ENCODE measurements at regions of chr22 and their contacts with region 1.

Region 1: GRCh38 chr22:24189249-24190158 is 8.2 kb downstream of the SUSD2 start:
- DNase-seq: peak; percentile 68
- H3K4me3 Mint-ChIP-seq: no peak overlapping the region
- H3K27ac Mint-ChIP-seq: no peak overlapping the region
- H3K4me1 Mint-ChIP-seq: peaks cover 3% of the 10 kb centered on the region
- H3K27me3 Mint-ChIP-seq: peaks cover 2% of the 10 kb centered on the region

Region 2: DNA sequence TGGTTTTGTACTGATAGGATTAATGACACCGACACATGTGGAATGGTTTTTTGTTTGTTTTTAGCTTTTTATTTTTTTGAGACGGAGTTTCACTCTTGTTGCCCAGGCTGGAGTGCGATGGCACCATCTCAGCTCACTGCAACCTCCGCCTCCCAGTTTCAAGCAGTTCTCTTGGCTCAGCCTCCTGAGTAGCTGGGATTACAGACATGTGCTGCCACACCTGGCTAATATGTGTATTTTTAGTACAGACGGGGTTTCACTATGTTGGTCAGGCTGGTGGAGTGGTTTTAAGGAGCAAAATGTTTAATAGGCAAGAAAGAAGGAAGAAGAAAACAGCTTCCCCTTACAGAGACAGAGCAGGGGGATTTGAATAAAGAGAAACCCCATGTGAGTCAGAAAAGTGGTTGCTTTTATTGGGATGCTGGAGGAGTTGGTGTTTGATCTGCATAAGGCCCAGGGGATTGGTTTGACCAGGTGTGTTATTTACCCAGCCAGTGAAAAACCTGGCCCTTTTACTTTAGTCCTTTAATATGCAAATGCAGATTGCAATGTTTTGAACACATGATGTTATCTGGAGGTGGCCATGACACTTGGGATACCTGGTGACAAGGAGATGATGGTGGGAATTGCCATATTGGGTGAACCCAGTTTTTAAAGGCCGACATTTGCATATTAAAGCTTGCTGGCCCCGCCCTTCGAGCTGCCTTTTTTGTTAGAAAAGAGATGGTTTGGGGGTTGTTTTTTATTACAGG is 16.1 kb after region 1 on chr22:
- CTCF ChIA-PET with region 1: no interaction called
- POLR2A ChIA-PET with region 1: no interaction called
- DNase-seq: no peak
- H3K4me3 Mint-ChIP-seq: no peak overlapping the region
- H3K27ac Mint-ChIP-seq: no peak overlapping the region
- H3K4me1 Mint-ChIP-seq: peaks cover 44% of the 10 kb centered on the region
- H3K27me3 Mint-ChIP-seq: peaks cover 8% of the 10 kb centered on the region

Region 3: DNA sequence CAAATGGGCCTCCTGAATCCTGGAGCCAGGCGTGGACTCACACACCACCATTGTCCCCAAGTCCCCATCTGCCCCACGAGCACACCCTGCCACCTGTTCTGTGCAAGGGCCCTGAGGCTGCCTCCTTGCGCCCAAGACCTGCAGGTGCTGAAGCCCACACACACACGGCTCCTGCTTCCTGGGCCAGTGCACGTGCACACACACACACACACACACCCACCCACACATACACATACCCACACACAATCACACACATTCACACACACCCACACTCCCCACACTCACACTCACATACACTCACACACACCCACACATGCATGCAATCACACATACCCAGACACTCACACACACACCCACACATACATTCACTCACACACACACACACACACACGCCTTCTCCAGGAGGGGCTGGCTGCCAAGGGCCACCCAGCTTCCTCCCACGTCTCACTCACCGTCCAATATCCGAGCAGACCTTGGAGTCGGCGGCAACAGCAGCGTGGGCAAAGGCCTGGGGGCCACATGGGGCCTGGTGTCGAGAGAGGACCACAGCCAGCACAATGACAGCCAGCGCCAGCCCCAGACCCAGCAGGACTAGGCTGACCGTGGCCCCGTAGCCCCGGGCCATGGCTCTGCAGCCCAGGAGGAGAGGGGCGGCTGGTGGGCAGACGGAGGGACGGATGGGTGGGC is 54.7 kb after region 1 on chr22:
- CTCF ChIA-PET with region 1: interaction called, 13 read pairs
- POLR2A ChIA-PET with region 1: interaction called, 3 read pairs
- DNase-seq: no peak
- H3K4me3 Mint-ChIP-seq: no peak overlapping the region
- H3K27ac Mint-ChIP-seq: peak overlapping the region; percentile 71
- H3K4me1 Mint-ChIP-seq: peaks cover 42% of the 10 kb centered on the region
- H3K27me3 Mint-ChIP-seq: peaks cover 3% of the 10 kb centered on the region